Panc1 (cell line): ENCODE measurements at regions of chr18 and their contacts with region 1.

Region 1: DNA sequence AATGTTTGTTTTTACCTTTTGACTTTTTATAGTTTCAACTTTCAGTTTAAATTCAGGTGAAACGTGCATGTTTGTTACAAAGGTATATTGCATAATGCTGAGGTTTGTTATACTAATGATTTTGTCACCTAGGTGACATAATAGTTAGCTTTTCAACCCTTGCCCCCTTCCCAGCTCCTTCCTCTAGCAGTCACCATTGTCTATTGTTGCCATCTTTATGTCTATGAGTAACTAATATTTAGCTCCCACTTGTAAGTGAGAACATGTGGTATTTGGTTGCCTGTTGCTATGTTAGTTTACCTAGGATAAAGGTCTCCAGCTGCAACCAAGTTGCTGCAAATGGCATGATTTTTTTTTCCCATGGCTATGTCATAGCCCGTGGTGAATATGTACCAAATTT is 322.3 kb upstream of the SETBP1 start:
- DNase-seq: no peak
- ATAC-seq: no peak
- H3K4me3 ChIP-seq: no peak overlapping the region
- H3K27ac ChIP-seq: no peak overlapping the region
- H3K4me1 ChIP-seq: no peaks in the 10 kb centered on the region
- H3K27me3 ChIP-seq: no peaks in the 10 kb centered on the region
- CTCF ChIP-seq: no peak

Region 2: DNA sequence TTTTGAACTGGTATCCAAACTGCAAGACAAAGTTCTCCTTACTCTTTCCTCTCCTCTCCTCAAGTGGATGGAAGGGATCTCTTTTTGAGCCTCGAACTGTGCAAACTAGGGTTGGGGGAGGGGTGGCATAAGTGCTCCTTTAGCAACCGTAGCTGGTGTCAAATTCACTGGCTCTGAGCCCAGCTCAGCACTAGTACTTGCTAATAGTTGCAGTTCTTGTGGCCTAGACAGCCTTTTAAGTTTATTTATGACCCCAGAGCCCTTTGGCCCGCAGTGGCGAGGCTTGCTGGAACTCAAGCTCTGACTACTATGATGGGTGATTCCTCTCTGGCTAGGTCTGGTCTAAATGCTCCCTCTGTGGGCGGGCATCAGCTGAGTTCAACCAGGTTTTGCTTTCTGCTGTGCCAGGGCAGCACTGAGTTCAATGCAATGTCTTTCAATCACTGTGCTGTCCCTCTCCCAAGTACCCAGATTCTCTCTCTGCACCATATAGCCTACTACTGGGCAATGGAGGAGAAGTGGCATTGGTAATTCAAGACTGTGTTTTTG is 552.7 kb before region 1 on chr18:
- CTCF ChIA-PET with region 1: no interaction called
- POLR2A ChIA-PET with region 1: no interaction called
- in situ Hi-C with region 1: no loop called
- intact Hi-C with region 1: no loop called
- DNase-seq: no peak
- ATAC-seq: no peak
- H3K4me3 ChIP-seq: no peak overlapping the region
- H3K27ac ChIP-seq: no peak overlapping the region
- H3K4me1 ChIP-seq: no peaks in the 10 kb centered on the region
- H3K27me3 ChIP-seq: no peaks in the 10 kb centered on the region
- CTCF ChIP-seq: no peak

Region 3: DNA sequence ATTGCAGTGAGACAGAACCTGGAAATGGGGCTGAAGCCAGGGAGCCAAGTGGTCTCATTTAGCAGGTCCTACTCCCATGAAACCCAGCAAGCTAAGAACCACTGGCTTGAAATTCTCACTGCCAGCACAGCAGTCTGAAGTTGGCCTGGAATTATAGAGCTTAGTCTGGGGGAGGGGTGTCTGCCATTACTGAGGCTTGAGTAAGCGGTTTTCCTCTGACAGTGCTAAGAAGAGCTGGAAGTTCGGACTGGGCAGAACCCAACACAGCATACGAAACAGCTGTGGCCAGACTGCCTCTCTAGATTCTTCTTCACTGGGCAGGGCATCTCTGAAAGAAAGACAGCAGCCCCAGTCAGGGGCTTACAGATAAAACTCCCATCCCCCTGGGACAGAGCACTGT is 16.6 kb after region 1 on chr18:
- CTCF ChIA-PET with region 1: no interaction called
- POLR2A ChIA-PET with region 1: no interaction called
- in situ Hi-C with region 1: no loop called
- intact Hi-C with region 1: loop called (anchors 2 kb)
- DNase-seq: no peak
- ATAC-seq: no peak
- H3K4me3 ChIP-seq: no peak overlapping the region
- H3K27ac ChIP-seq: no peak overlapping the region
- H3K4me1 ChIP-seq: no peaks in the 10 kb centered on the region
- H3K27me3 ChIP-seq: no peaks in the 10 kb centered on the region
- CTCF ChIP-seq: no peak